ENCODE measurements at regions of chr15 and their contacts with region 1.

Region 1: DNA sequence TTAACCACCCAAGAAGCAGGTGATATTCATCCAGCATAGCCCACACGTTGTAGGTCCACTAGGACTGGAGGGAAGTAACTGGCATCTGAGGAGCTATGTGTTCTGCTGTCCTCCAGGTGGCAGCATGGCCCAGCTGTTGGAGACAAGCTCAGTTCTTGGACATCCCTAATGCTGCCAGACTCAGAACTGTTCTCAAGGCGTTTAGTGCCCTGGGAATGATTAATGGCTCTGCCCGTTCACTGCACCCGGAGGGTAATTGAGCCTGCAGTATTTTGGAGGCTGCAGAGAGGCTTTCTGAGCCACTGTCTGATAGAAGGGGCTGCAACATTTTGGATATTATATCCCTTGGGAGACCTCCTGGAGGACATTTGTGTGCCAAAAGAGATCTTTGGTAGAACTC is 521.2 kb upstream of the SEMA6D start:
- DNase-seq: peak; percentile 69 to 84 (median 79)
- ATAC-seq: peak; percentile 73 to 99 (median 96)
- H3K4me3 ChIP-seq: no peak overlapping the region
- H3K27ac ChIP-seq: no peak overlapping the region
- H3K4me1 ChIP-seq: no peaks in the 10 kb centered on the region
- H3K27me3 ChIP-seq: peaks cover 0 to 3% (median 0%) of the 10 kb centered on the region in 9 donors
- CTCF ChIP-seq: peak; percentile 69 to 89 (median 81)
- POLR2A ChIP-seq: no peak

Region 2: GRCh38 chr15:47331841-47332393 is 135.9 kb after region 1 on chr15:
- intact Hi-C with region 1: no loop called
- DNase-seq: no peak
- ATAC-seq: no peak
- H3K4me3 ChIP-seq: no peak overlapping the region
- H3K27ac ChIP-seq: no peak overlapping the region
- H3K4me1 ChIP-seq: no peaks in the 10 kb centered on the region
- H3K27me3 ChIP-seq: peaks cover 0 to 4% (median 0%) of the 10 kb centered on the region in 9 donors
- CTCF ChIP-seq: no peak
- POLR2A ChIP-seq: no peak

Region 3: DNA sequence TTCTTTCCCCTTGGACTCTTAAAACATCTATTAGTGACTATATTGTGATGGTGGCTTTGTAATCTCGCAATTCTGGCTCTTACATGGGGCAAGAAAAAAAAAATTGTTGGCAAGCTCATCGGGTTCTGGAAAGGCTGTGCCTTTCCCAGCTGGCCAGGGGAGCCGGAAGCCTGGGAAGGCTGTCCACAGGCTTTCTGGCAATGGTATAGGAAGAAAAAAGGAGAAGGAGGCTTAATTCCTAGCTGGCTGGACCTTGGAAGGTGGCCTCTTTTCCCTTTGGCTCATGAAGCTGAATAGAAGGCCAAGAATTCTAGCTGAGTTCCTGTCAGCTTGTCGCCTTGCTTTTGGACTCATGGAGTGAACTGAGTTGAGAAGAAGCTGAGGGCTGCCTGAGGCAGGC is 277.8 kb after region 1 on chr15:
- intact Hi-C with region 1: loop called in 6 of 10 experiments (anchors 5 to 10 kb)
- DNase-seq: peak; percentile 63 to 76 (median 74)
- ATAC-seq: peak; percentile 93 to 97 (median 94)
- H3K4me3 ChIP-seq: no peak overlapping the region
- H3K27ac ChIP-seq: peak overlapping the region in 8 of 12 donors; percentile 7 to 57 (median 34)
- H3K4me1 ChIP-seq: peaks cover 0 to 28% (median 14%) of the 10 kb centered on the region in 12 donors
- H3K27me3 ChIP-seq: no peaks in the 10 kb centered on the region
- CTCF ChIP-seq: no peak
- POLR2A ChIP-seq: no peak

Region 4: DNA sequence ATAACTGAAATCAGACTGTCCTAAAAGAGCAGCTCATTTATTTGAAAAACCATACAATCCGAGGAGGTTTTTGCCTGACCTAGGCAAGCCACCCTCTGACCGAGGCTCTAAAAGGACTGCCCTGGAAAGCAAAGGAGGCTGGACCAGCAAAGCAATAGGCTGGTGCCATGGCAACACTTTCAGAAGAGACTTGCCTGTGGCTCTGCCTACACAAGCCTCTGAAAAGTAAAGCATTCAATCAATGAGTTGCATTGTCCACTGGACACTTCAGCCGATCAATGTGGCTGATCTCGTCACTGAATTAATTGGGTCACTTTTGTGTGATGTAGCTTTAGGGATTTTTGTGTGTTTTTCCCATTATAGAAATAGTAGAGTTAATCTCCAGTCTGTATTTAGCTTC is 422.2 kb after region 1 on chr15:
- intact Hi-C with region 1: loop called in 6 of 10 experiments (anchors 5 to 10 kb)
- DNase-seq: no peak
- ATAC-seq: no peak
- H3K4me3 ChIP-seq: no peak overlapping the region
- H3K27ac ChIP-seq: no peak overlapping the region
- H3K4me1 ChIP-seq: no peaks in the 10 kb centered on the region
- H3K27me3 ChIP-seq: peaks cover 0 to 14% (median 0%) of the 10 kb centered on the region in 9 donors
- CTCF ChIP-seq: no peak
- POLR2A ChIP-seq: no peak

Region 5: GRCh38 chr15:47717036-47717611 is 521.1 kb after region 1 on chr15 and contains the start of gene SEMA6D:
- intact Hi-C with region 1: loop called in 3 of 10 experiments (anchors 5 to 10 kb)
- DNase-seq: peak; percentile 77 to 89 (median 82)
- ATAC-seq: peak; percentile 76 to 84 (median 82)
- H3K4me3 ChIP-seq: peak within 1 kb of the TSS; percentile 62 to 96 (median 84)
- H3K27ac ChIP-seq: peak within 1 kb of the TSS; percentile 80 to 94 (median 86)
- H3K4me1 ChIP-seq: peaks cover 0 to 43% (median 24%) of the 10 kb centered on the region in 12 donors
- H3K27me3 ChIP-seq: peaks cover 0 to 33% (median 0%) of the 10 kb centered on the region in 9 donors
- CTCF ChIP-seq: peak in 11 of 12 donors; percentile 30 to 69 (median 54)
- POLR2A ChIP-seq: no peak
- total RNA-seq, gene SEMA6D: 4.9 to 23.2 (median 10.9) TPM

Region 6: GRCh38 chr15:48084759-48085590 is 888.9 kb after region 1 on chr15:
- intact Hi-C with region 1: loop called in 2 of 10 experiments (anchors 10 kb)
- DNase-seq: no peak
- ATAC-seq: no peak
- H3K4me3 ChIP-seq: no peak overlapping the region
- H3K27ac ChIP-seq: no peak overlapping the region
- H3K4me1 ChIP-seq: no peaks in the 10 kb centered on the region
- H3K27me3 ChIP-seq: peaks cover 0 to 13% (median 0%) of the 10 kb centered on the region in 9 donors
- CTCF ChIP-seq: peak in 4 of 12 donors; percentile 11 to 32 (median 18)
- POLR2A ChIP-seq: no peak

Region 7: DNA sequence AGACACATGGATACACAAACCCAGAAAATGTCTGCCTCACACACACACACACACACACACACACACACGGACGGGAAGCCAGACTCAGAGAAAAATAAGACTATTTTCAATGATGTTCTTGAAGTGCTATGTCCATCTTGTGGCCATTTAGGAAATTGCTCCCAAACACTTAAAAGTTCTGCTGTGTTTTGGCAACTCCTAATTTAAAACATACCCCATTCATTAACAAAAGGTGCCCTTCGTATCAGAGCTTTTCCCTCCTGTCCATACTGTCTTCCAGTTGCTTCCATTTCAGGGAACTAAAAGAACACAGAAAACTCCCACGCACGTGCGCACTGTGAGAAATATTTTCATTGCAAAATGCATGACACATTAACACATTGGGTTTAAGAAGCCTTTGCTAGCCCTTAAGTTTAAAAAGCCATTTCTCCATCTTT is 1054.6 kb after region 1 on chr15:
- intact Hi-C with region 1: loop called in 3 of 10 experiments (anchors 10 kb)
- DNase-seq: peak in 3 of 5 donors; percentile 9 to 31 (median 20)
- ATAC-seq: peak in 1 of 4 donors; percentile 28
- H3K4me3 ChIP-seq: no peak overlapping the region
- H3K27ac ChIP-seq: no peak overlapping the region
- H3K4me1 ChIP-seq: no peaks in the 10 kb centered on the region
- H3K27me3 ChIP-seq: peaks cover 0 to 5% (median 0%) of the 10 kb centered on the region in 9 donors
- CTCF ChIP-seq: peak; percentile 21 to 61 (median 49)
- POLR2A ChIP-seq: no peak

Region 8: DNA sequence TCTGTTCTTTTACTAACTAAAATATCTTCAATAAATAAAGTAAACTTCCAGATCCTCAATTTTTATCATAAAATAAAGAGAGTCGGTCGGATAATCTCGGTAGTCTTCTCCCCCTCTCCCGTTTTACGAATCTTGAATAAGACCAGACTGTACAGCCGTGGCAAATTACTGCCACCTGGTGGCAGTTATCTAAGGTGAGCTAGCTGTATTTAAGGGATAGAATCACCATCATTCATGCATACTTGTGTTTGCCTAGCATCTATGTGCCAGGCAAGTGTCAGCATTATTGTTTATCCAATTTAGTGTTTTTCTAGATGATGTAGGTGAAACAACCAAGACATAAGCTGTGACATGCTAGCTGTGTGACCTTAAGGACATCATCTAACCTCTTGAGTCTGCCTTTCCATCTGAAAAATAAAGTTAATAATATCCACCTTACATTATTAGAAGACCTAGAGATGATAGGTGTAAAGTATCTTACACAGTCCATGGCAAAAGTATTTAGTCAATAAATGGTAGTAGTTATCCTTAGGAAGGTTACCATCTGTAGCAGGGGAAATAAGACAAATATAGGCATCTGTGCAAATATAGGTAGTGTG is 1156.5 kb after region 1 on chr15:
- intact Hi-C with region 1: loop called in 5 of 10 experiments (anchors 5 to 10 kb)
- DNase-seq: peak in 4 of 5 donors; percentile 28 to 50 (median 36)
- ATAC-seq: peak in 3 of 4 donors; percentile 68 to 71 (median 70)
- H3K4me3 ChIP-seq: peak overlapping the region in 1 of 12 donors; percentile 16
- H3K27ac ChIP-seq: no peak overlapping the region
- H3K4me1 ChIP-seq: peaks cover 0 to 8% (median 0%) of the 10 kb centered on the region in 12 donors
- H3K27me3 ChIP-seq: no peaks in the 10 kb centered on the region
- CTCF ChIP-seq: peak; percentile 67 to 87 (median 76)
- POLR2A ChIP-seq: no peak

Measured in heart left ventricle (tissue), 16 donors.